ENCODE measurements at regions of chr11 and their contacts with region 1.

Region 1: GRCh38 chr11:19868281-19868821 is 155.7 kb downstream of the NAV2 start:
- DNase-seq: no peak

Region 2: GRCh38 chr11:19769820-19770219 is 98.5 kb before region 1 on chr11:
- intact Hi-C with region 1: loop called (anchors 10 kb)
- DNase-seq: no peak

Region 3: DNA sequence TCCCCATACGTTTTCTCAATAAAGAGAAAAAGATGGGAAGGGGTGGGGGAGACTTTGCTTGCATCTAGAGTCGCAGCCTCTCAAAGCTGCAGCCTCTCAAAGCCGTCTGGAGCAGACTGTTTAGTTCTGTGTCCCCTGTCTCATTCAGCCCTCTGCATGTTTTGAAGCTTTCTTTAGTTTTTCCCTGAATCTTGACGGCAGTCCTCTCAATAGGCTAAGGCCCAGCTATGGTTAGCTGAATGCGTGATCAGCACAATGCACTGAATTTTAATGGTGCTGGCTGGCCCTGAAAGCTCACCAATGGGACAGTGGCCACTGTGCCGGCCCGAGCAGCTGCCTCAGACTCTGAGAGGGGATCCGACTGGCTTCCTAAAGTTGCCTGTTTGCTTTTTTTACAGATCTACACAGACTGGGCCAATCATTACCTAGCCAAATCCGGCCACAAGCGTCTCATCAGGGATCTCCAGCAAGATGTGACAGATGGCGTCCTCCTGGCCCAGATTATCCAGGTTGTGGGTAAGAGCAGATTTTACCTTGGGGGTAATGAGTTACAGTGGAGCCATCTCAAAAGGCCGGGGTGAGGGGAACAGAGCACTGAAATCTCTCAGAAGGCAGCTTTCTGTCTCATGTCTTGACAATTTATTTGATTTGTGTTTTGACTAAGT is 36.1 kb before region 1 on chr11:
- intact Hi-C with region 1: loop called (anchors 5 kb)
- DNase-seq: peak in 8 of 10 donors; percentile 24 to 89 (median 36)

Region 4: GRCh38 chr11:20080032-20080685 is 211.8 kb after region 1 on chr11:
- intact Hi-C with region 1: no loop called
- DNase-seq: peak in 2 of 10 donors; percentile 31 to 90